HepG2 (cell line): ENCODE measurements at regions of chrX and their contacts with region 1.

Region 1: DNA sequence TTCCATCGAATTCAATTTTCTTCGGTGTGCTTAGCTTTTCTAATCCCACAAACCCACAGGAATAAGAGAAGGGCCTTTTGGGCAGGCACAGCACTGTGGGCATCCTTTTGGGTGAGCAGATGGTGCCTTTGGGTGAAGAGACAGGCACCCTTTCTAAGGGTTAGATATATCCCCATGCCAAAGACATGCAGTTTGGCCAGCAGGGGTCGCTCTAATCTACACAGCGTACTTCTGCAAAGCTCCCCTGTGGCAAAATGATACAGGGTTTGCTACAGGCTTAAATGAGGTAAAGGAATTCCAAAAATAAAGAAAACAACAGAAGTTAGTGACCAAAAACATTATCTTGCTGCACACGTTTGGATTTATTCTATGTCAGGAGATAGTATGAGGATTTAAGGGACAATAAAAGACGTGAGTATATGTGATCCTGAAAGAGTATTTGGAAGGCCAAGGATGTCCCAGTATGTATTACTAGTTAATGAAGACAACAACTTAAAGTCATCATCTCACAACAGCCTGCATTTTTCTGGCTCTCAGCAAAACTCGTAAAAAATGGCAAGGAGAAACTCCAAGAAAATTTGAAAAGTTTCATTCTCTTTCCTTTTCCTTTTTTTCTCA is 49.5 kb downstream of the PHEX start:
- DNase-seq: peak; percentile 18
- ATAC-seq: peak; percentile 89
- H3K4me3 ChIP-seq: no peak overlapping the region
- H3K27ac ChIP-seq: no peak overlapping the region
- H3K4me1 ChIP-seq: no peaks in the 10 kb centered on the region
- H3K27me3 ChIP-seq: no peaks in the 10 kb centered on the region
- CTCF ChIP-seq: peak; percentile 63
- EP300 ChIP-seq: no peak
- POLR2A ChIP-seq: no peak
- RAD21 ChIP-seq: no peak

Region 2: GRCh38 chrX:22192417-22193060 is 111.0 kb after region 1 on chrX:
- CTCF ChIA-PET with region 1: interaction called, 5 read pairs
- POLR2A ChIA-PET with region 1: no interaction called
- in situ Hi-C with region 1: no loop called
- intact Hi-C with region 1: loop called (anchors 1 kb)
- DNase-seq: peak; percentile 38
- ATAC-seq: peak; percentile 98
- H3K4me3 ChIP-seq: no peak overlapping the region
- H3K27ac ChIP-seq: no peak overlapping the region
- H3K4me1 ChIP-seq: no peaks in the 10 kb centered on the region
- H3K27me3 ChIP-seq: no peaks in the 10 kb centered on the region
- CTCF ChIP-seq: peak; percentile 77
- EP300 ChIP-seq: no peak
- POLR2A ChIP-seq: no peak
- RAD21 ChIP-seq: peak; percentile 54; the same call in 1 of the 2 replicates

Region 3: GRCh38 chrX:22748093-22748999 is 666.8 kb after region 1 on chrX:
- CTCF ChIA-PET with region 1: no interaction called
- POLR2A ChIA-PET with region 1: no interaction called
- in situ Hi-C with region 1: no loop called
- intact Hi-C with region 1: loop called (anchors 5 kb)
- DNase-seq: peak; percentile 13
- ATAC-seq: peak; percentile 81
- H3K4me3 ChIP-seq: no peak overlapping the region
- H3K27ac ChIP-seq: no peak overlapping the region
- H3K4me1 ChIP-seq: no peaks in the 10 kb centered on the region
- H3K27me3 ChIP-seq: no peaks in the 10 kb centered on the region
- CTCF ChIP-seq: peak; percentile 63
- EP300 ChIP-seq: no peak
- POLR2A ChIP-seq: no peak
- RAD21 ChIP-seq: no peak